RWPE1 (cell line): ENCODE measurements at regions of chr7 and their contacts with region 1.

Region 1: GRCh38 chr7:128462460-128462859 is 6.8 kb downstream of the HILPDA start:
- DNase-seq: no peak
- H3K27ac ChIP-seq: no peak overlapping the region
- CTCF ChIP-seq: no peak

Region 2: DNA sequence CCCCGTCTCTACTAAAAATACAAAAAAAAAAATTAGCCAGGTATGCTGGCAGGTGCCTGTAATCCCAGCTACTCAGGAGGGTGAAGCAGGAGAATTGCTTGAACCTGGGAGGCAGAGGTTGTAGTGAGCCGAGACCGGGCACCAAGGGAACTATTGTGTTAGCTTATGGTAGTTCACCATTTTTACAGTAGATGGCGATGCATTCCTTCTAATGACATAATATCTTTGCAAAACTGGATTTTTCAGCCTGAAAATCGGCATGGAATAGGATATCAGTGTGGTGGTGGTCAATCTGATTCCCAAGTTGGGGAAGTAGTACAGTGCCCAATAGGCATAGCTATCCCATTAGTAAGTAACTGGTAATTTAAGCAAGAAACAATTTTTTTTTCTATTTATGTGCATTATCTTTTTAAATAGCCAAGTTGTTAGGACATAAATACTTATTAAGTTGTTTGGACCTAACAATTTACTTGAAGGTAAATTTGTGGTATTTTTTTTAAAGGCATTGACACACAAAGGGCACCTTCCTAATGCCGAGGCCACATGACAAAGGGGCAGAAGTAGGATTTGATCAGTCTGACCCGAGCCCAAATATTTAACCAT is 35.1 kb before region 1 on chr7:
- CTCF ChIA-PET with region 1: interaction called, 14 read pairs
- POLR2A ChIA-PET with region 1: no interaction called
- DNase-seq: peak; percentile 39
- H3K27ac ChIP-seq: no peak overlapping the region
- CTCF ChIP-seq: peak; percentile 86

Region 3: GRCh38 chr7:128530855-128531104 is 68.3 kb after region 1 on chr7:
- CTCF ChIA-PET with region 1: no interaction called
- POLR2A ChIA-PET with region 1: no interaction called
- DNase-seq: no peak
- H3K27ac ChIP-seq: peak overlapping the region; percentile 88
- CTCF ChIP-seq: no peak